Activated CD8-positive, alpha-beta T cell treated with anti-CD3 and anti-CD28 coated beads, Interleukin-2, amount 10 ng/mL, durations not matched to agents 7 days and 5 days (primary cell): ENCODE measurements at regions of chr6 and their contacts with region 1.

Region 1: DNA sequence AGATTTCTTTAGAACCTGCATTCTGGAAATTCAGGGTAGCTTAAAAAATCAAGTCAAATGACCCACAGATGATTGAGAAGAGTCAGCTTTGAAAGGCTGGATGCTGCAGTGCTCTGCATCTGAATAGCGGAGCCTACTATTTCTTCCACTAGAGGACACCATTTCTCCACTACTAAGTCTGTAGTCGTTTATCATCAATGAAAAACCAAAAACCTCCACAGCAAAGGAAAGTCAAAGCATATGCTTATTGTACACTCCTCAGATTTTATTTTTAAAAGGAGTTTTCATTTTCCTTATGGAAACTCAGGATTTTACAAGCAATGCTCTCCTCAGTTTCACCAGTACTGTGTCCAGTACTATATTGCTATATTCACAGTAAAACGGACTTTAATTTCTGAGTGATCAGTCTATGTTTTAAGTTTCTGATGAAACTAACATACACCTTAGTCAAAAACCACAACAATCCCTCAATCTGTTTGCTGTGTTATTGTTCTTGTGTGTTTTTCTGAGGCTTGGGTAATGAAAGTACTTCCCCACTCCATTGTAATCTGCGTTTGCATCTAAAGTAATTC is 50.5 kb upstream of the ENPP5 start:
- DNase-seq: no peak
- ATAC-seq: peak; percentile 42
- H3K4me3 Mint-ChIP-seq: no peak overlapping the region
- H3K27ac Mint-ChIP-seq: no peak overlapping the region
- H3K4me1 Mint-ChIP-seq: peaks cover 7% of the 10 kb centered on the region
- H3K27me3 Mint-ChIP-seq: peaks cover 5% of the 10 kb centered on the region

Region 2: DNA sequence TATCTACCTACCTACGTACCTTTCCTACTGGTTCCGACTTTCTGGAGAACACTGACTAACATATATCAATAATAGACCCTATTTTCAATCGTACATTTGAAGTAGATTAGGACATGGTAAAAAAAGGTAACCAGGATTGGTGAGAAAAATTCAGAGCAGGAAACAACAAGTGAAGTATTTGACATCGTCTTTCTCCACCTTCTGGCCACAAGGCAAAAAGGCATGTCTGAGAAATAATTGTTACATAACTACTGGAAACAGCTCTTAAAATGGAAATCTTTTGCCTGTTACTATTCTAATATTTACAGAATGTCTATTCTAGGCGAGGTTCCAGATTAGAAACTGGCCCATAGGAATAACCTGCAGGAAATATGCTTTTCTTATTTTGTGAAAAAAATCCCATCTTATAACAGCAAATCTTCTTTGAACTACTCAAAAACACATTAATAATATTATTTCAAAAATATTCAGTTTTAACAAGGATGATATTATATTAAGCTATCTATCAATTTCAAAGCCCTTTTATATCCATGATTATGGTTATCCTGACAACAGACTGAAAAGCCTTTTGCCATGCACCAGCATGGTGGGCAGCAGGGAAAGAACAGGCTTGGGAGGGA is 189.1 kb after region 1 on chr6:
- CTCF ChIA-PET with region 1: interaction called, 19 read pairs
- POLR2A ChIA-PET with region 1: no interaction called
- DNase-seq: peak; percentile 26
- ATAC-seq: no peak
- H3K4me3 Mint-ChIP-seq: no peak overlapping the region
- H3K27ac Mint-ChIP-seq: no peak overlapping the region
- H3K4me1 Mint-ChIP-seq: no peaks in the 10 kb centered on the region
- H3K27me3 Mint-ChIP-seq: peaks cover 11% of the 10 kb centered on the region